Activated T-helper 2 cell treated with anti-CD3 and anti-CD28 coated beads, Interferon-gamma antibody, Interleukin-2, Interleukin-4, amounts not matched to agents 10 μg/mL and 5 μg/mL and 100 μg/mL, durations not matched to agents 14 hours and 24 hours and 36 hours (primary cell): ENCODE measurements at regions of chr6 and their contacts with region 1.

Region 1: DNA sequence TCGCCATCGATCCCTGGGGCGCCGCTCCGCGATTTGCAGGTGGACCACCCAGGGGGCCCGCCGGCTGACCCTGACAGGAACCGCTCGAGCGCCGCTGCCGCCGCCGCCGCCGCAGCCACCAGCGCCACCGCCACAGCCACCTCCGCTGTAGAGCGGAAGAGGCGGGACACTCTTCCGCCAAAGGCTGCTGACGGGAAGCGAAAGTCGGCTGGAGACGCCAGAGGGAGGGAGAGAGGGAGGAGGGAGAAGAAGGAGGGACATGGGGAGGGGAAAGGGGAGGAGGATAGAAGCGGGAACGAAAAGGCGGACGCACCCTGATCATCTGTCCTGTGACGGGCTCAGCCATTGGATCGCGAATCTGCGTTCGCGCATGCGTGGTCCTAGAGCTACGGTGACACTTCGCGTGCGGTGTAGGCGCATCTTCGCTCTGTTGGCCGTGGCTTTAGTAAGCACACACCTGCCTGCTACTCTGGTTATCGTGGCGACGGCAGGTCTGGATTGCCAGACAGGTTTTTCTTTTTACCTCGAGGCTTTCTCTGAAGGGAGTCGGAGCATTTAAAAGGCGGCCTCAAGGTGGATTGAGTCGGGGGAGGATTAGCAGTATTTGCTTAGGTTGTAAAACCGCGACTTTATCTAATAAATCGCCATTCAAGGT is at the start of gene TMEM30A:
- DNase-seq: peak; percentile 97
- H3K4me3 Mint-ChIP-seq: no peak within 1 kb of the TSS
- H3K27ac Mint-ChIP-seq: no peak within 1 kb of the TSS
- H3K4me1 Mint-ChIP-seq: peaks cover 40% of the 10 kb centered on the region
- H3K27me3 Mint-ChIP-seq: no peaks in the 10 kb centered on the region
- total RNA-seq, gene TMEM30A: 52.7 and 61.6 TPM in 2 replicates

Region 2: GRCh38 chr6:73461537-73462350 is 1823.0 kb before region 1 on chr6 and contains the start of gene MTO1:
- intact Hi-C with region 1: loop called (anchors 5 kb)
- DNase-seq: peak; percentile 78
- H3K4me3 Mint-ChIP-seq: peak within 1 kb of the TSS; percentile 89
- H3K27ac Mint-ChIP-seq: peak within 1 kb of the TSS; percentile 94
- H3K4me1 Mint-ChIP-seq: peaks cover 41% of the 10 kb centered on the region
- H3K27me3 Mint-ChIP-seq: no peaks in the 10 kb centered on the region
- total RNA-seq, gene MTO1: 27.9 and 32.1 TPM in 2 replicates

Region 3: DNA sequence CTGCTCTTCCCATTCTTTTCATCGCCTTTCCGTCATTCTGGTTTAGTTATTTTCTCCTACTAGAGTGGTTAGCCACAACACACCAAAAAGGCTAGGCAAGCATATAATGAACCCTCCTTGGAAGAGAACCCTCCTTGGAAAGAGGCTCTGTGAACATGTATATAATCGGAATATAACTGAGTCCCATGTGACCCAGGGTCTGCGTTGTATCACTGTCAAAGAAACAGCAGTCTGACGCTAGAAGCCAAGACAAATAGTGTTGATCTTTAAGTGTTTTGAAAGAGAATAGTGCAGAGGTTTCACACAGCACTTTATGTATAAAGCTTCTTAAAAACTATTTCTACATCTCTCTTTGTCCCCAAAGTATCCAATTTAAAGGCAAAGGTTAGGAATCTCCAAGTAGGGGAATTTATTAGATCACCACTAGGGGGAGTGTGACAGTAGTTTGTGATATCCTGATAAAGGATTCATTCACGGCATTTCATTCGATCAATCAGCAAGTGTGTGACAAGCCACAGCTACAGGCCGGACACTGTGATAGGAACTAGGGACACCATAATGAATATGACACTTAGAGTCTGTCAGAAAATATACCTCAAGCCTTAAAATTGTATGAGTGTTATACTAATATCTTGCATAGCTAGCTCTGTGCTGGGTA is 1193.5 kb before region 1 on chr6:
- intact Hi-C with region 1: no loop called
- DNase-seq: no peak
- H3K4me3 Mint-ChIP-seq: no peak overlapping the region
- H3K27ac Mint-ChIP-seq: no peak overlapping the region
- H3K4me1 Mint-ChIP-seq: no peaks in the 10 kb centered on the region
- H3K27me3 Mint-ChIP-seq: no peaks in the 10 kb centered on the region

Region 4: GRCh38 chr6:75243333-75244062 is 41.3 kb before region 1 on chr6 and contains the start of gene COX7A2:
- intact Hi-C with region 1: loop called (anchors 1 kb)
- DNase-seq: peak; percentile 85
- H3K4me3 Mint-ChIP-seq: peak within 1 kb of the TSS; percentile 97
- H3K27ac Mint-ChIP-seq: peak within 1 kb of the TSS; percentile 97
- H3K4me1 Mint-ChIP-seq: peaks cover 18% of the 10 kb centered on the region
- H3K27me3 Mint-ChIP-seq: peaks cover 12% of the 10 kb centered on the region
- total RNA-seq, gene COX7A2: 529 and 542 TPM in 2 replicates

Region 5: DNA sequence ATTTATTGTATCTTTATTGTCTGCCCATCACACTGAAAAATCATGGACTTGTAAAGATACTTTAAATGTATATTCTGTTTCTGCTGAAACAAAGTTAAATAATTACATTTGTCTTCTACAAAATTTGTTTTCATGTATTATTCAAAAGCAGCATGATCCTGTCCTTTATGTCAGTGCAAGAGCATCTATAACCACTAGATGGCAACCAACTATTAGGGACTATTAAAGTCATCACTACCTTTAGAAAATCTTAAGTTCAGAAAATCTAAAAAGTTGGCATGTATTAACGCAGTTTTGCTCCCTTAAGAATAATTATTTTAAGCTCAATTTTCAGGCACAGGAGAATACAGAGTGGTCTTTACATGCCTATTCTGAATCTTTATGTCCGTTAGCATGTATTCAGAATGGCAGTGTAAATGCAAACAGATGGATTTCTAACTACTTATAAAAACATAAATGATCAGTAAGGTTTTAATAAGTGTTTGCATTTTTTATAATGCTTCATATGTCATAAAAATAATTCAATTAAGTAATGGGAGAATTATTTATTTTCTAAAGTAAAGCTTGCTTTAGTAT is 18.0 kb before region 1 on chr6:
- intact Hi-C with region 1: loop called (anchors 2 kb)
- DNase-seq: no peak
- H3K4me3 Mint-ChIP-seq: no peak overlapping the region
- H3K27ac Mint-ChIP-seq: no peak overlapping the region
- H3K4me1 Mint-ChIP-seq: peaks cover 22% of the 10 kb centered on the region
- H3K27me3 Mint-ChIP-seq: no peaks in the 10 kb centered on the region

Region 6: DNA sequence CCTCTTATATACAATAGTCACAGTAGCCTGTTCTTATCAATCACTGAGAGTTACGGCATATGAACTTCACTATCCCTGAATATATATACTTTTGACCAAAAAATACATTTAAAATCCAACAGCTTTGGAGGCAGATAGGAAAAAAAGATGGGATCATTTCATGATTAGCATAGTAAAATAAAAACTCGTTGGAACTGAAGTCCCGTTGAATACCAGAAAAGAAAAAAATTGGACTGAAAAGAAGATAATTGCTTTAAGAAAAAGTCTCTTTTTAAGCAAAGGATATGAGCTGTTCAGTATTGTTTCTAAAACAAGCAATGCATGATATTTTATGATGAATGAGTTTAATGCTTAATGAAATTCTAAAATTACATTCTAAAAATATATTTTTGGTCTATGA is 213.2 kb after region 1 on chr6:
- intact Hi-C with region 1: loop called (anchors 2 kb)
- DNase-seq: no peak
- H3K4me3 Mint-ChIP-seq: no peak overlapping the region
- H3K27ac Mint-ChIP-seq: no peak overlapping the region
- H3K4me1 Mint-ChIP-seq: peaks cover 16% of the 10 kb centered on the region
- H3K27me3 Mint-ChIP-seq: peaks cover 37% of the 10 kb centered on the region

Region 7: GRCh38 chr6:75601304-75602245 is 316.8 kb after region 1 on chr6 and contains the start of gene SENP6:
- intact Hi-C with region 1: loop called (anchors 2 kb)
- DNase-seq: peak; percentile 68
- H3K4me3 Mint-ChIP-seq: peak within 1 kb of the TSS; percentile 99
- H3K27ac Mint-ChIP-seq: peak within 1 kb of the TSS; percentile 99
- H3K4me1 Mint-ChIP-seq: peaks cover 38% of the 10 kb centered on the region
- H3K27me3 Mint-ChIP-seq: no peaks in the 10 kb centered on the region
- total RNA-seq, gene SENP6: 73.8 and 81.7 TPM in 2 replicates